Calu3 (cell line): ENCODE measurements at regions of chr4 and their contacts with region 1.

Region 1: GRCh38 chr4:112231779-112232713 is at the start of gene AP1AR:
- DNase-seq: peak; percentile 88
- H3K4me3 Mint-ChIP-seq: peak within 1 kb of the TSS; percentile 82
- H3K27ac Mint-ChIP-seq: peak within 1 kb of the TSS; percentile 98
- H3K4me1 Mint-ChIP-seq: peaks cover 12% of the 10 kb centered on the region
- H3K27me3 Mint-ChIP-seq: no peaks in the 10 kb centered on the region
- CTCF ChIP-seq: peak; percentile 17
- total RNA-seq, gene AP1AR: 23.3 and 30.8 TPM in 2 replicates

Region 2: GRCh38 chr4:112099701-112100297 is 132.2 kb before region 1 on chr4:
- CTCF ChIA-PET with region 1: interaction called, 5 read pairs
- intact Hi-C with region 1: loop called (anchors 1 kb)
- DNase-seq: no peak
- H3K4me3 Mint-ChIP-seq: no peak overlapping the region
- H3K27ac Mint-ChIP-seq: no peak overlapping the region
- H3K4me1 Mint-ChIP-seq: peaks cover 12% of the 10 kb centered on the region
- H3K27me3 Mint-ChIP-seq: no peaks in the 10 kb centered on the region
- CTCF ChIP-seq: no peak

Region 3: GRCh38 chr4:112145326-112145819 is 86.7 kb before region 1 on chr4 and contains the start of gene FAM241A:
- CTCF ChIA-PET with region 1: no interaction called
- intact Hi-C with region 1: loop called (anchors 5 kb)
- DNase-seq: peak; percentile 82
- H3K4me3 Mint-ChIP-seq: peak within 1 kb of the TSS; percentile 85
- H3K27ac Mint-ChIP-seq: peak within 1 kb of the TSS; percentile 47
- H3K4me1 Mint-ChIP-seq: peaks cover 8% of the 10 kb centered on the region
- H3K27me3 Mint-ChIP-seq: no peaks in the 10 kb centered on the region
- CTCF ChIP-seq: no peak
- total RNA-seq, gene FAM241A: 1.4 and 1.6 TPM in 2 replicates

Region 4: DNA sequence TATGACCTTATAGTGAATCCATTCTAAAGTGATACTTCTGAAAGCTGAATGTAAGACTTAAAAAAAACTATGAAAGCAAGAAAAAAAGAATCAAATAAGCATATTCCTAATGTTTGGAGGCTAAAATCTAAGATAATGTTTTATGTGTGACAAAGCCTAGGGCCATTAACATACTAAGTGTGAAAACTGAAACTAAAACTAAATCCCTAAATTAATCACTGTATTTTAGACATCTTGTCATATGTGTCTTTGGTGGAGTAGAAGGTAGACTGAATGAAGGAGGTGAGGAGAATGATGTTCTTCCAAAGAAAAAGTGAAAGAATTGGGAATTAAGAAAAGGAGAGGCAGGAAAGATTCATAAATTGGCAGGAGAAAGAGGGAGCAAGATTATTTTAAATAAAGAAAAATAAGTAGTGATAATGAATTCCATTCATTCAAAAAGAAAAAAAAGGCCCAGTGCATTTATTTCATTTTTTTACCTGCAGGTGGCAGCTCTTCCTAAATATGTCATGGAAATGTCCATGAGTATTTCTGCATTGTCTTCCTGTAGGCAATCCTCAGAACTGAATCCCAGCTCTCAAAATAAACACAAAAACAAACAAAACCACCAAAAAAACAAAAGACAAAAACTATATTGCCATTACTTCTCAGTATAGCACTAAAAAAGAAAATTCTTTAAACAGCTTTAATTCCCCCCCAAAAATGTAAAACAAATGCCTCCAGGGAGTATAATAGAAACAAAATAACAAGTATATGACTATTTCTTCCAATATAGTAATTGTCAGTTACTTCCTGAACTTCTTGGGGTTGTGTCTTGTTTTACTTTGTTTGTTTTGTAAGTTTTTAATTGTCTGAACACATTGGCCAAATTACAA is 17.4 kb before region 1 on chr4:
- CTCF ChIA-PET with region 1: no interaction called
- intact Hi-C with region 1: loop called (anchors 1 kb)
- DNase-seq: no peak
- H3K4me3 Mint-ChIP-seq: no peak overlapping the region
- H3K27ac Mint-ChIP-seq: no peak overlapping the region
- H3K4me1 Mint-ChIP-seq: peaks cover 9% of the 10 kb centered on the region
- H3K27me3 Mint-ChIP-seq: no peaks in the 10 kb centered on the region
- CTCF ChIP-seq: peak; percentile 21